T-cell (primary cell): ENCODE measurements at regions of chrX and their contacts with region 1.

Region 1: DNA sequence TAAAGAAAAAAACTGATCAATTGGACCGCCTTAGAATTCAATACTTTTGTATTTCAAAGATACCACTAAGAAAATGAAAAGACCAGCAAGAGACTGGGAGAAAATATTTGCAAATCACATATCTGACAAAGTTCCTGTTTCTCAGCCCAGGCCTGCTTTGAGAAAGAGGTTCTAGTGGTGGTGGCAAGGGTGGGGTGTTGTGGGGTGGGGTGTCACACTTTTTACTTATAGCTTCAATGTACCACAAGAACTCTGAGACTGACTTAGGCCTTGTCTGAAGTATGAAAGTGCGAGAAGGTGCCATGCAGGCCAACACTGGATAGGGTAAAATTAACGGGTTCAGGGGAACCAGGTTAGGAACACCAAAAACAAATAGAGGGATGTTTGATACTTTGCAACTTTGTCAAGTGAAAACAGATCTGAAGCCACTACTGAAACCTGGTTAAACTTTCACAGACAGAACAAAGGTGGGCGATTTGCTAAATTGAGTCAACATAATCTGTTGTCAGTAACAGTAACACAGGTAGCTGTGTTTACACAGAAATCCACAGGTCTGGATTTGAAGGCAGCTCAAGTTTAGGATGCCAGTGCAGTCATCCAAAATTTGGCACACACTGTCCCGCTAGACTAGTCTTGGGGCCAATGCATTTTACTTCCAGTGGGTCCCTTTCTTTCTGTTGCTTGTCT is 88.8 kb downstream of the DGKK start:
- DNase-seq: peak in 2 of 35 experiments; percentile 0
- ATAC-seq: no peak
- H3K4me3 ChIP-seq: no peak overlapping the region
- H3K4me3 Mint-ChIP-seq: no peak overlapping the region
- H3K27ac ChIP-seq: no peak overlapping the region
- H3K27ac Mint-ChIP-seq: no peak overlapping the region
- H3K4me1 ChIP-seq: no peaks in the 10 kb centered on the region
- H3K4me1 Mint-ChIP-seq: no peaks in the 10 kb centered on the region
- H3K27me3 ChIP-seq: no peaks in the 10 kb centered on the region
- H3K27me3 Mint-ChIP-seq: peaks cover 0 to 22% of the 10 kb centered on the region in 2 donors

Region 2: DNA sequence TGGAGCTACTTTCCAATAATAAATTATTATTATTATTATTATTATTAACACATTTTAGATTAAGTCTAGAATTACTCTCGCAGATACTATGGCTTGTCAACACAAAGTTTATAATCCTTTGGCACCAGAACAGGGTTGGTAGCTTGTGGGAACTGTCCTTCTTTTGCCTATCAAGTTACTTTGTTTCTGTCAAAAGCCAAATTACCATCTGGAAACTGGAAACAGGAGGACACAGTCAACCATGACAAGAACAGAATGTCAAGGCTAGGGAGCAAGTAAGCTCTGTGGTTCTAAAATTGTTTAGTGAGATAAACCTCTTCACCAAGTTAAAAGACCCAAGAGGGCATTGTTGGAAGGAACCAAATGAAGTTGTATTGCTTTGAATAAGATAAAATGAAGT is 46.3 kb after region 1 on chrX:
- CTCF ChIA-PET with region 1: interaction called in 1 of 2 experiments, 16 read pairs
- POLR2A ChIA-PET with region 1: no interaction called
- DNase-seq: no peak
- ATAC-seq: no peak
- H3K4me3 ChIP-seq: no peak overlapping the region
- H3K4me3 Mint-ChIP-seq: no peak overlapping the region
- H3K27ac ChIP-seq: no peak overlapping the region
- H3K27ac Mint-ChIP-seq: no peak overlapping the region
- H3K4me1 ChIP-seq: no peaks in the 10 kb centered on the region
- H3K4me1 Mint-ChIP-seq: no peaks in the 10 kb centered on the region
- H3K27me3 ChIP-seq: no peaks in the 10 kb centered on the region
- H3K27me3 Mint-ChIP-seq: peaks cover 2 to 46% of the 10 kb centered on the region in 2 donors

Region 3: DNA sequence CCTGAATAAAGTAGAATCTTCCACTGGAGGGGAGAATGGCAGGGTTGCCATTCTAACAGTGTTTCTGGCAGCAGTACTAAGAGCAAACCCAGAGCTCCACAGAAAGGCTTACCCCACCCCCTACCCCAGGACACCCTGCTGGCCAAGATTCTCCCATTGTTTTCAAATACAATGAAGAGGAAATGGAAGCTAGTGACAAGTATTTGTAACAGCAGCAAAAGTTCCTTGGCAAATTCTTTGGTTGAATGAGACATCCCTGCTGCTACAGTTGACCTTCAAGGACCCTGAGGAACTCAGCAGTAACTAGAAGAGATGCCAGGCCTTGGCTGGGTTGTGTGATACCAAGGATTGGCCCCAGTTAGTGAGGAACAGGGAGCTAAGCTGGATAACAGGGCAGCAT is 212.9 kb after region 1 on chrX:
- CTCF ChIA-PET with region 1: no interaction called
- POLR2A ChIA-PET with region 1: no interaction called
- DNase-seq: no peak
- ATAC-seq: no peak
- H3K4me3 ChIP-seq: no peak overlapping the region
- H3K4me3 Mint-ChIP-seq: no peak overlapping the region
- H3K27ac ChIP-seq: no peak overlapping the region
- H3K27ac Mint-ChIP-seq: no peak overlapping the region
- H3K4me1 ChIP-seq: no peaks in the 10 kb centered on the region
- H3K4me1 Mint-ChIP-seq: no peaks in the 10 kb centered on the region
- H3K27me3 ChIP-seq: no peaks in the 10 kb centered on the region
- H3K27me3 Mint-ChIP-seq: peaks cover 2 to 34% of the 10 kb centered on the region in 2 donors